T-cell (primary cell): ENCODE measurements at regions of chr12 and their contacts with region 1.

Region 1: GRCh38 chr12:97321621-97322020 is 141.0 kb upstream of the RMST start:
- DNase-seq: no peak
- ATAC-seq: no peak
- H3K4me3 ChIP-seq: no peak overlapping the region
- H3K4me3 Mint-ChIP-seq: no peak overlapping the region
- H3K27ac ChIP-seq: no peak overlapping the region
- H3K27ac Mint-ChIP-seq: no peak overlapping the region
- H3K4me1 ChIP-seq: no peaks in the 10 kb centered on the region
- H3K4me1 Mint-ChIP-seq: no peaks in the 10 kb centered on the region
- H3K27me3 ChIP-seq: peaks cover under 1 to 2% of the 10 kb centered on the region in 2 experiments
- H3K27me3 Mint-ChIP-seq: peaks cover 20 to 29% of the 10 kb centered on the region in 2 donors

Region 2: DNA sequence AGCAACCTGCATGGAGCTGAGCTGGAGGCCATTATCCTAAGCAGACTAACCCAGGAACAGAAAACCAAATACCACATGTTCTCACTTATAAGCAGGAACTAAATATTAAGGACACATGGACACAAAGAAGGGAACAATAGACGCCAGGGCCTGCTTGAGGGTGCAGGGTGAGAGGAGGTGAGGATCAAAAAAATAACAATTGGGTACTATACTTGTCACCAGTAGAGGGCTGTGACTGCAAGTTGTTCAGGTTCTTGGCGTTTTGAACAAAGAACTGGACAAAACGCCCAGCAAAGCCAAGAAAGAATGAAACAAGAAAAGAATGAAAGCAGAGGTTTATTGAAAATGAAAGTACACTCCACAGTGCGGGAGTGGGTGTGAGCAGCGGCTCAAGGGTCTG is 623.1 kb before region 1 on chr12:
- CTCF ChIA-PET with region 1: interaction called in 1 of 2 experiments, 11 read pairs
- POLR2A ChIA-PET with region 1: no interaction called
- DNase-seq: no peak
- ATAC-seq: no peak
- H3K4me3 ChIP-seq: no peak overlapping the region
- H3K4me3 Mint-ChIP-seq: no peak overlapping the region
- H3K27ac ChIP-seq: no peak overlapping the region
- H3K27ac Mint-ChIP-seq: no peak overlapping the region
- H3K4me1 ChIP-seq: no peaks in the 10 kb centered on the region
- H3K4me1 Mint-ChIP-seq: no peaks in the 10 kb centered on the region
- H3K27me3 ChIP-seq: no peaks in the 10 kb centered on the region
- H3K27me3 Mint-ChIP-seq: peaks cover 15 to 30% of the 10 kb centered on the region in 2 donors

Region 3: DNA sequence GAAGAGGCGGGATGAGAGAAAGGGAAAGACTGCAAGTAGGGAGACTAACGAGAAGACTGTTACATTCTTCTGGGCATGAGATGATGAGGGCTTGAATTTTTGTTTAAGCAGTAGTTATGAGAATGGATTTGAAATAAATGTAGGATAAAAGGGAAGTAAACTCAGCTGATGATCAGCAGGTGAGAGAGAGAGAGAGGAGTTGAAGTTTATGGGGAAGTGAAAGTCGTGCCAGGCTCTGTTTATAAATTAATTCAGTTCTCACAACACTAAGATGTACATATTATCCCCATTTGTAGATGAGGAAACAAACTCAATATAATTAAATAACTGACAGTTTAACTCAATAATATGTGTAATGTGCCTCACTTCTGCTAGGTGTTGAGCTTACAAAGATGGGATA is 29.0 kb before region 1 on chr12:
- CTCF ChIA-PET with region 1: no interaction called
- POLR2A ChIA-PET with region 1: interaction called in 1 of 2 experiments, 11 read pairs
- DNase-seq: no peak
- ATAC-seq: no peak
- H3K4me3 ChIP-seq: no peak overlapping the region
- H3K4me3 Mint-ChIP-seq: no peak overlapping the region
- H3K27ac ChIP-seq: no peak overlapping the region
- H3K27ac Mint-ChIP-seq: no peak overlapping the region
- H3K4me1 ChIP-seq: no peaks in the 10 kb centered on the region
- H3K4me1 Mint-ChIP-seq: no peaks in the 10 kb centered on the region
- H3K27me3 ChIP-seq: peaks cover 0 to 5% of the 10 kb centered on the region in 2 experiments
- H3K27me3 Mint-ChIP-seq: peaks cover 5 to 30% of the 10 kb centered on the region in 2 donors